Thyroid gland (tissue), 4 donors: ENCODE measurements at regions of chr17 and their contacts with region 1.

Region 1: DNA sequence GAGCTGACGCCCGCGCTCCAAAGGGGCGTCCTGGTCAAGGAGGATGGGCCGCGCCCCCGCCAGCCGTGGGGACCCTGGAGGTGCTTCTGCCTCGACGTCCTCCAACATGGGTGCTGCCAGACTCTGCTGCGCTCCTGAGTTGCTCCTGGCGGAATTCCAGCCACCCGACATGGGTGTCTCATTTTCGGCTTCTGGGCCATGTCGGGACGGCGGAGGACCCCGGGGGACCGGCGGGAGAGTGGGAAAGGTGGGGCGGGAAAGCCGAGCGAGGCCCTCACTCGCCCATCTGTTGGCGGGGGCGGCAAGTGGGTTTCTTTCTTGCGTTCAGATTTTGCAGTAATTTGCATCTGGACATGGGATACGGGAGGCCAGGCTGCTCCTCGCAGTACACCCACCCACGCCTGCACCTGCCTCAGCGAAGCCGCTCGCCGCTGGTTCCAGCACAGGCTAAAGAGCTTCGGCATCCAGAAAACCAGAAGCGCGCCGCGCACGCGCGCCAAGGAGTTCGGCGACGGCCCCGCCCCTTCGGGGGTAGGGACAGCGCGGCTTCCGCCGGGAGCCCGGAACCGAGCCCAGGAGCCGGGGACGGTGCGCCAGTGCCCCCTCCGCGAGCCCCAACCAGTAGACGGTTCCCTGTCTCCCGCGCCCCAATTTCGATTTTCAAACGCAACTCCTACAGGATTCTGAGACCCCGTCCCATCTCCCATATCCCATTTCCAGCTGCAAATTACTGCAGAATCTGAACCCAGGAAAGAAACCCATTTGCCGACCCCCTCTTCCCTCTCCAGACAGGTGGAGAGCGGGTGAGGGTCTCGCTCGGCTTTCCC is at the start of gene ARMC7:
- DNase-seq: peak; percentile 92 to 93
- H3K4me3 ChIP-seq: peak within 1 kb of the TSS; percentile 47 to 74 (median 66)
- H3K27ac ChIP-seq: peak within 1 kb of the TSS; percentile 56 to 76 (median 65)
- H3K4me1 ChIP-seq: peaks cover 22 to 50% of the 10 kb centered on the region in 2 donors
- H3K27me3 ChIP-seq: no peaks in the 10 kb centered on the region
- CTCF ChIP-seq: peak in 1 of 6 experiments; percentile 5
- POLR2A ChIP-seq: peak in 1 of 2 donors; percentile 85
- total RNA-seq, gene ARMC7: 8.7 to 13.1 (median 10.5) TPM

Region 2: DNA sequence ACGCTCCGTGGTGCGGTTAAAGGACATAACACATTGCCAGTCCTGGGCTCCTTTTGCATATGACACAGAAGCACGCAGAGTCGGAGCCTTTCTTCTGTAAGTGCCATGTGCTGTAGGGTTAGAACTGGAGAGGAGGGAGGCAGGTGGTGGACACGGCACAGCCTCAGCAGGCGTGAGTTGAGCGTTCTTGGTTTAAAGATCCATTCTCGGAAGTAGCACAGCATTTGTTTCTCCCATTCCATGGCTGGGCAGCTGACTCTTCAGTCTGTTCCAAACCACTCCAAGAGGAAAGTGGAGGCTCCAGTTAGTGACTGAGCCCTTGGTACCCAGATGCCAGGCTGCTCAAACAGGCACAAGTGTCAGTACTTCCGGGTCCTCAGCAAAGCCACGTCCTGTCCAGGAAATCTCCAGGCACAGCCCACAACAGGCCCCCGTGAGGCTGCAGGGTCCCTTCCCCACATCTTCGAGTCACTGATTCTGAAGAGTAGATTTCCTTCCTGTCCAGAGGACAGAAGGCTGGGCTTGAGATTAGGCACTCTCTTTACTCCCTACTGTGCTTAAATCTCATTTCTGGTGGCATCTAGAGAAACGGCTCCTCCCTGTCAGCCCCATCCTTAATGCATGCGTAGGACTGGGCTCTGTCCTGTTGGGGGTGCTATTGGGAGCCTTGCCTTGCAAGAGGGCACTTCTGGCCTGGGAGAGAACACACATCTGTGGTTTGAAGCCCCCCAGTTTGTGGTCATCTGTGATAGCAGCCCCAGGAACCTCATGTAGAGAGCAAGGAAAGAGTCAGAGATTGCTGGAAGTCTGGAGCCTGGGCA is 293.9 kb before region 1 on chr17:
- intact Hi-C with region 1: no loop called
- DNase-seq: peak; percentile 57 to 58
- H3K4me3 ChIP-seq: no peak overlapping the region
- H3K27ac ChIP-seq: peak overlapping the region; percentile 87 to 92 (median 91)
- H3K4me1 ChIP-seq: peaks cover 60 to 79% of the 10 kb centered on the region in 2 donors
- H3K27me3 ChIP-seq: no peaks in the 10 kb centered on the region
- CTCF ChIP-seq: peak in 2 of 6 experiments; percentile 6 to 18
- POLR2A ChIP-seq: no peak

Region 3: GRCh38 chr17:74961657-74962490 is 147.7 kb before region 1 on chr17:
- intact Hi-C with region 1: loop called (anchors 5 kb)
- DNase-seq: peak; percentile 89 to 92
- H3K4me3 ChIP-seq: no peak overlapping the region
- H3K27ac ChIP-seq: no peak overlapping the region
- H3K4me1 ChIP-seq: peaks cover 0 to 3% of the 10 kb centered on the region in 2 donors
- H3K27me3 ChIP-seq: no peaks in the 10 kb centered on the region
- CTCF ChIP-seq: peak; percentile 53 to 81 (median 73)
- POLR2A ChIP-seq: no peak

Region 4: DNA sequence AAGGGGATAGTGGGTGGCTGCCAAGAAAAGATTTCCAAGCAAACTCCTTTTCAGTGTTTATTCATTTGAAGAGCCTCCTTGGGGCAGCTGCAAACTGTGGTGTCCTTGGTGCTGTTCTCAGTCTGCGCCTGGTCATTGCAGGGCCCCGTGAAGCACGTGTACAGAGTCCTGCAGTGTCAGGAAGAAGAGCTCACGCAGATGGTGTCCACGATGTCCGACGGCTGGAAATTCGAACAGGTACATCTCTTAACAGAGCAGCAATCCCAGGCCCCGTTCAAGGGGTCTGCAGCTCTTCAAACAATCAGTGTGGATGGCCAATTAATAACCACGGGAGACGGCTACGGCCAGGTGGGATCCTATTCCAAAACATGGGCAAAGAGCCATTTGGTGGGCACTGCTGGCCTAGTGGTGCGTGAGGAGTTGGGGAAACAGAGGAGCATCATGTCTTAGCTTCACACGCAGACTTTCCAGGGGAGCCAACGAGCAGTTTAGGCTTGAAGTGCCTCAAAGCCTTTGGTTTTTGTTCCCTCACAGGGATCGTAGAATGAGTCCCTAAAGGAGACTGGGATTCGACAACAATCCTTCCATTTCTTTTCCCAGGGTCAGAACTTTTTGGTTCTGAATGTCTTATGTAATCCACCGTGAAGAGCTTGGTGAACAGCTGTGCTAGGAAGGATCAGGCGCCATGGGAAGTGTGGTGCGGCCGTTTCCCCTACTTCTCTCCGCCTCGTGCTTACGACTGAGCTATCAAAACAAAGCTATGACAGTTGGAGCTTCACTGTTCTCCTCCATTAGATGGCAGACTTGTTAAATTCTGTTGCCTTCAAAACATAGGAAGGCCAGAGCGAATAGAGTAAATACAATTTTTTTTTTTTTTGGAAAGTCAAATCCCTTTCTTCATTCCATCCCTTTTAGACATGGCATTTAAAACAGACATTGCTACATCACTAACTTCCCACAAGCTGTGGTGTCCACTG is 50.0 kb before region 1 on chr17:
- intact Hi-C with region 1: loop called (anchors 5 kb)
- DNase-seq: peak; percentile 71 to 73
- H3K4me3 ChIP-seq: no peak overlapping the region
- H3K27ac ChIP-seq: peak overlapping the region; percentile 59 to 81 (median 77)
- H3K4me1 ChIP-seq: peaks cover 20 to 32% of the 10 kb centered on the region in 2 donors
- H3K27me3 ChIP-seq: no peaks in the 10 kb centered on the region
- CTCF ChIP-seq: peak in 4 of 6 experiments; percentile 37 to 43 (median 40)
- POLR2A ChIP-seq: no peak

Region 5: GRCh38 chr17:75182569-75183450 is 73.2 kb after region 1 on chr17 and contains the start of gene SUMO2:
- intact Hi-C with region 1: loop called (anchors 5 kb)
- DNase-seq: peak; percentile 94
- H3K4me3 ChIP-seq: peak within 1 kb of the TSS; percentile 54 to 98 (median 95)
- H3K27ac ChIP-seq: peak within 1 kb of the TSS; percentile 92 to 98 (median 97)
- H3K4me1 ChIP-seq: peaks cover 11 to 20% of the 10 kb centered on the region in 2 donors
- H3K27me3 ChIP-seq: no peaks in the 10 kb centered on the region
- CTCF ChIP-seq: peak in 3 of 6 experiments; percentile 32 to 54 (median 44)
- POLR2A ChIP-seq: peak; percentile 77 to 89
- total RNA-seq, gene SUMO2: 61.9 to 100 (median 82.1) TPM